Esophagus muscularis mucosa (tissue), 4 donors: ENCODE measurements at regions of chr2 and their contacts with region 1.

Region 1: GRCh38 chr2:60581433-60582282 is 28.2 kb upstream of the BCL11A start:
- DNase-seq: peak; percentile 91
- H3K4me3 ChIP-seq: peak overlapping the region; percentile 31 to 59 (median 48)
- H3K27ac ChIP-seq: no peak overlapping the region
- H3K4me1 ChIP-seq: peaks cover 3 to 12% (median 10%) of the 10 kb centered on the region in 4 donors
- H3K27me3 ChIP-seq: peaks cover 0 to 51% (median 3%) of the 10 kb centered on the region in 4 donors
- CTCF ChIP-seq: peak; percentile 87 to 98 (median 89)
- EP300 ChIP-seq: no peak
- POLR2A ChIP-seq: no peak

Region 2: DNA sequence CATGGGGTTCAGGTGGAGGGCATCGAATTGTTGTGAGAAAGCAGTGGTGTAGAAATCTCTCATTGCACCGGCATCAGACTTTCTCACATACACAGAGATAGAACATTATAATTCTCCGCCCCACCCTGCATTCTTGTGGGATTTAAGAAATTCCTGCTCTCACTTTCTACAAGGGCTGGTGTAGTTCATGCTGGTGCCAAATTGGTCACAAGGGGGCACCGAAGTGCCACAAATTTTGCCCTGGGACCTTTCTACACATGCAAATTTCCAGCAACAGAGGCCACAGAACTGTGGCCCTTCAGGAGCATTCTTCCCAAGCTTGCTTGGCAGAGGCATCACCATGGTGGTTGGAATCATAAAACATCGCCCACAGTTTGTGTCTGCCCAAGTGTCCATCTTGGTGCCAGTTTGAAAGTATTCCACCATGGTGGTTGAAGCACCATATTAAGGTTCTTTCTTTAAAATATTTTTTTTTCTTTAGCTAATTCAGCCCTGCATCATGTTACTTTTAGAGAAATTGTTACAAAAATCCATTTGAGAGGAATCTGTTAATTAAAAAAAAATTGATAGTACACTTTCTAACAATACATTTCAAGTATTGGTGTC is 1819.4 kb before region 1 on chr2:
- intact Hi-C with region 1: loop called (anchors 10 kb)
- DNase-seq: no peak
- H3K4me3 ChIP-seq: no peak overlapping the region
- H3K27ac ChIP-seq: no peak overlapping the region
- H3K4me1 ChIP-seq: no peaks in the 10 kb centered on the region
- H3K27me3 ChIP-seq: no peaks in the 10 kb centered on the region
- CTCF ChIP-seq: peak; percentile 35 to 60 (median 50)
- EP300 ChIP-seq: no peak
- POLR2A ChIP-seq: no peak

Region 3: DNA sequence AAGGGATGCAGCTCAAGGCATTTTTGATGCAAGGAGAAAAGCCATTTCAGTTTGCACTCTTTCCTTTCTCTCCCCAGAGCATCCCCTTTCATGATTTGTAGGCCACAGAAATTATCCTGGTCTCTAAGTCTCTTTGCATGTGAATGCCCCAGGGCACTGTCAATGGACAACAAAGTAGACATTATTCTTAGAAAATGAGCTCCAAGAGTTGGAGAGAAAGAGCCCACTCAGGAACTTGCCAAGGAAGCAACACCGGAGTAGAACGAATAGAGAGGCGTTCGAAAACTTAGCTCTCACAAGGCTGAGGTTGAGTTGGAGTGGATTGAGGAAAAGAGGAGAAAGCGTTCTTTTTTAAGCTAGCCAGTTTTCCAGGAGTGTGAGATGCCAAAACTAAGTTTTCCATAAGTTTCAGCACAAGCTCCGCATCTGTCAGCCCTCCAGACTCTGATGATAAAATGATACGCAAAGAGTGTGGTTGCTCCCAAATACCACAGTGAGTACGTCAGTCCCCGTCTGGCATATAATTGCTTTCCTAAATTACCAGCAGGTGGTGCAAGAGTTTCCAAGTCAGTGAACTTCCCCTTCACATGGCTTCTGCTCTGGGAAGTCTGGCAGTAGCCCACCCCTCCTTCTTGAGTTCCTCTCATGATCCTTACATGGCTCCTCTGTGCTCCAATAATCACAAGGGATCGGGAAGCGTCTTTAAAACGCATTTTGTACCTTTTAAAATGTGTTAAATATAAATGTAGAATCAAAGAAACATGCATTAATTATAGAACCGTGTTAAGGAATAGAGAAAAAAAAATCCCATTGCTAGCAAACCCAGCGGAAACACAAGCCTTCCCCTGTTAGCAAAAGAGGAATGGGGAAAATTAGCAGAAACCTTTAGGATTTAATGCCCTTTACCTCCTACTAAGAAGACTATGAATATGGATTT is 1279.9 kb before region 1 on chr2:
- intact Hi-C with region 1: loop called (anchors 10 kb)
- DNase-seq: no peak
- H3K4me3 ChIP-seq: no peak overlapping the region
- H3K27ac ChIP-seq: no peak overlapping the region
- H3K4me1 ChIP-seq: peaks cover 0 to 9% (median 5%) of the 10 kb centered on the region in 4 donors
- H3K27me3 ChIP-seq: no peaks in the 10 kb centered on the region
- CTCF ChIP-seq: peak; percentile 52 to 63 (median 56)
- EP300 ChIP-seq: no peak
- POLR2A ChIP-seq: no peak

Region 4: DNA sequence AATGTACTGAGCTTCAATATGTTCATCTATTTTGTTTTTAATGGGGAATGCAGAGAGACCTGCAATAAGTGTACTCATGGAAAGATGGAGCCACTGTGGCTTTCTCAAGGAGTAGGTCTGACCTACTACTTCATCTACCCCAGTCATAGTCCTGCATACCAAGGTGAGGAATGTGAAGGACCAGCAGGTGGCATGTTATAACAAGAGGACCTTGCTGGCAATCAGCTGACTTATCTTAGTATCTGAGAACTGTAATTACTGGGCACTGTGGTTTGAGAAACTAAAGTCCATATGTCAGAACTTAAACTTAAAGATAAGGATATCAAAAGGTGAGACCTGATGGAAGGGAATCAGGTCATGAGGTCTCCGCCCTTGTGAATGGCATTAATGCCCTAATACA is 1132.4 kb before region 1 on chr2:
- intact Hi-C with region 1: no loop called
- DNase-seq: no peak
- H3K4me3 ChIP-seq: no peak overlapping the region
- H3K27ac ChIP-seq: no peak overlapping the region
- H3K4me1 ChIP-seq: no peaks in the 10 kb centered on the region
- H3K27me3 ChIP-seq: no peaks in the 10 kb centered on the region
- CTCF ChIP-seq: no peak
- EP300 ChIP-seq: no peak
- POLR2A ChIP-seq: no peak